Right lobe of liver (tissue), 6 donors: ENCODE measurements at regions of chr6 and their contacts with region 1.

Region 1: GRCh38 chr6:108113557-108114519 is 39.3 kb upstream of the OSTM1 start:
- DNase-seq: peak in 1 of 3 donors; percentile 45
- ATAC-seq: peak; percentile 38 to 54 (median 48)
- H3K4me3 ChIP-seq: peak overlapping the region in 1 of 3 donors; percentile 24
- H3K27ac ChIP-seq: no peak overlapping the region
- H3K4me1 ChIP-seq: peaks cover 0 to 42% (median under 1%) of the 10 kb centered on the region in 4 donors
- H3K27me3 ChIP-seq: peaks cover 13% of the 10 kb centered on the region in 2 donors
- CTCF ChIP-seq: peak; percentile 41 to 57 (median 44)
- POLR2A ChIP-seq: no peak

Region 2: GRCh38 chr6:107972413-107973096 is 141.3 kb before region 1 on chr6:
- intact Hi-C with region 1: no loop called
- DNase-seq: no peak
- ATAC-seq: no peak
- H3K4me3 ChIP-seq: no peak overlapping the region
- H3K27ac ChIP-seq: no peak overlapping the region
- H3K4me1 ChIP-seq: peaks cover 0 to 6% (median 0%) of the 10 kb centered on the region in 4 donors
- H3K27me3 ChIP-seq: no peaks in the 10 kb centered on the region
- CTCF ChIP-seq: no peak
- POLR2A ChIP-seq: no peak

Region 3: GRCh38 chr6:108168501-108169463 is 54.9 kb after region 1 on chr6:
- intact Hi-C with region 1: no loop called
- DNase-seq: peak in 2 of 3 donors; percentile 56 to 62
- ATAC-seq: peak; percentile 74 to 88 (median 78)
- H3K4me3 ChIP-seq: peak overlapping the region in 1 of 3 donors; percentile 3
- H3K27ac ChIP-seq: no peak overlapping the region
- H3K4me1 ChIP-seq: peaks cover 0 to 21% (median 0%) of the 10 kb centered on the region in 4 donors
- H3K27me3 ChIP-seq: peaks cover 7 to 37% of the 10 kb centered on the region in 2 donors
- CTCF ChIP-seq: peak; percentile 10 to 38 (median 34)
- POLR2A ChIP-seq: no peak

Region 4: GRCh38 chr6:108186226-108186625 is 72.4 kb after region 1 on chr6:
- intact Hi-C with region 1: no loop called
- DNase-seq: peak in 1 of 3 donors; percentile 2
- ATAC-seq: no peak
- H3K4me3 ChIP-seq: no peak overlapping the region
- H3K27ac ChIP-seq: no peak overlapping the region
- H3K4me1 ChIP-seq: no peaks in the 10 kb centered on the region
- H3K27me3 ChIP-seq: no peaks in the 10 kb centered on the region
- CTCF ChIP-seq: no peak
- POLR2A ChIP-seq: no peak

Region 5: DNA sequence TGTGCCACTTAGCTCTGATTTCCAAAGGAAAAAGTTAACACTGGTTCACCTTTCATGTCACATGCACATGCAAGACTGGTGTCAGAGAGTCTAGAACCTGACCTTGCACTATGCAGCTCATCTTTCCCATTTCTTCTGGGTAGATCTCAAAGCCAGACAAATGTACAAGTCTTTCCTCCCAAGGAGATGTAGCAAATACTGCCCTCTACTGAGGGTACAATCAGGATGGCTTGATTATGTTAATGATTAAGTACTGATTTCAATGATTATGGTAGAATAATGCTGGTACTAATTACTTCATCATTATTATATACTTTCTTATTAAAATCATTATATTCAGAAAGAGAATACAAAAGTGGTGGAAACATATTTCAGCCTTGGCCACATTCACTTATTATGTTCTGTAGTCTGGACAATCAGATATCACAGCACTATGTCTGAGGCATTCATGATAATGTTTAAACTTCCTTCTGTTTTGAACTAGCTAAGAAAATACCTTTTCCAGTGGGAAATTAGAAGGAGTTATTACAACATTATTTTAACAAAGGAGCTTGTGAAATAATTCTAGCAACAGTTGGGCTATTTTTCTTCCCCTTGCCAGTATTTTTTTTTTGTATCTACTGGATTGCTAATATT is 378.4 kb after region 1 on chr6:
- intact Hi-C with region 1: loop called in 1 of 2 experiments (anchors 5 kb)
- DNase-seq: no peak
- ATAC-seq: peak; percentile 78 to 90 (median 84)
- H3K4me3 ChIP-seq: no peak overlapping the region
- H3K27ac ChIP-seq: no peak overlapping the region
- H3K4me1 ChIP-seq: no peaks in the 10 kb centered on the region
- H3K27me3 ChIP-seq: no peaks in the 10 kb centered on the region
- CTCF ChIP-seq: peak; percentile 57 to 75 (median 68)
- POLR2A ChIP-seq: no peak

Region 6: GRCh38 chr6:108501559-108501958 is 387.7 kb after region 1 on chr6:
- intact Hi-C with region 1: loop called in 1 of 2 experiments (anchors 10 kb)
- DNase-seq: no peak
- ATAC-seq: no peak
- H3K4me3 ChIP-seq: no peak overlapping the region
- H3K27ac ChIP-seq: no peak overlapping the region
- H3K4me1 ChIP-seq: no peaks in the 10 kb centered on the region
- H3K27me3 ChIP-seq: no peaks in the 10 kb centered on the region
- CTCF ChIP-seq: no peak
- POLR2A ChIP-seq: no peak